Activated B cell treated with CpG ODN at 0.5 μM for 24 hours (primary cell): ENCODE measurements at regions of chr13 and their contacts with region 1.

Region 1: DNA sequence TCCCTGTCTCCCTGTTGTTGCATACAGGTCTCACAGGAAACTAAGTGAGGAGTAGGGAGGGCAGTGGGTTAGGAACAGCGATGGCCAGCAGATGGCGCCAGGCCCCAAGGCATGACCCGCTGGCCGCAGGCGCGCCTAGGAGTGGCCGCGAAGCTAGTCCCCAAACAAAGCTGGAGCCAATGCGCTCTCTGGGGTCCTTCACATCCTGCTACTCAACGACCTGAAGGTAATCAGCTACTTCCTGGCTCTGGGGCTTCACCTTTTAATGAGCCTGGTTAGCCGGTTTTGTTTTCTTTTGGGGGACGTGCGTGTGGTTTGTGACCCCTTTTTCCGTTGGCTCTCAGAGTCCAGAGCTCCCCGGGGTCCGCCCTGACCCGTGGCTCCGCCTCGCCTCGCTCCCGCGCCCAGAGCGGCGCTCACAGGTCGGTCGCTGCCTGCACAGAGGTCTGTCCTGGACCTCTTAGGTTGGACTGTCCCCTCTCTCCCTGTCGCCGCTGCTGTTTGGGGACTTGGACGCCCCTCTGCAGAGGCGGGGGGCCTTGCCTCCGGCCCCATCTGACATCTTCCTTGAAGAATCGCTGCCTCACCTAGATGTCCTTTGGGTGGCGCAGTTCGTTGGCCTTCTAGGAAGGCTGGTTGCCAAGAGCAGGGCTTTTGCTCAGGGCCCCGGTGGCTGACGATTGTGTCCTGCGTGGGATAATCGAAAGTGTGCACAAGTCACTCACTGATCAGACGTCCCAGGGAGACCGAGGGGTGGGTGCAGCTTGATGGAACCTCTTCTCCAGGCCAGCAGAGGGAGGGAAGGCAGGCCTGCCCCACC is 62.1 kb upstream of the GTF3A start:
- DNase-seq: peak; percentile 73
- ATAC-seq: peak; percentile 92
- H3K4me3 Mint-ChIP-seq: peak overlapping the region; percentile 35
- H3K27ac Mint-ChIP-seq: no peak overlapping the region
- H3K4me1 Mint-ChIP-seq: peaks cover 9% of the 10 kb centered on the region
- H3K27me3 Mint-ChIP-seq: peaks cover 11% of the 10 kb centered on the region
- CTCF ChIP-seq: peak; percentile 65

Region 2: GRCh38 chr13:26946684-26947343 is 415.5 kb before region 1 on chr13:
- CTCF ChIA-PET with region 1: interaction called, 7 read pairs
- POLR2A ChIA-PET with region 1: no interaction called
- intact Hi-C with region 1: loop called (anchors 1 kb)
- DNase-seq: no peak
- ATAC-seq: peak; percentile 58
- H3K4me3 Mint-ChIP-seq: no peak overlapping the region
- H3K27ac Mint-ChIP-seq: no peak overlapping the region
- H3K4me1 Mint-ChIP-seq: no peaks in the 10 kb centered on the region
- H3K27me3 Mint-ChIP-seq: peaks cover 5% of the 10 kb centered on the region
- CTCF ChIP-seq: no peak

Region 3: GRCh38 chr13:27339299-27339698 is 23.0 kb before region 1 on chr13:
- CTCF ChIA-PET with region 1: interaction called, 14 read pairs
- POLR2A ChIA-PET with region 1: no interaction called
- intact Hi-C with region 1: loop called (anchors 1 kb)
- DNase-seq: no peak
- ATAC-seq: peak; percentile 71
- H3K4me3 Mint-ChIP-seq: no peak overlapping the region
- H3K27ac Mint-ChIP-seq: no peak overlapping the region
- H3K4me1 Mint-ChIP-seq: peaks cover 3% of the 10 kb centered on the region
- H3K27me3 Mint-ChIP-seq: peaks cover 4% of the 10 kb centered on the region
- CTCF ChIP-seq: no peak

Region 4: DNA sequence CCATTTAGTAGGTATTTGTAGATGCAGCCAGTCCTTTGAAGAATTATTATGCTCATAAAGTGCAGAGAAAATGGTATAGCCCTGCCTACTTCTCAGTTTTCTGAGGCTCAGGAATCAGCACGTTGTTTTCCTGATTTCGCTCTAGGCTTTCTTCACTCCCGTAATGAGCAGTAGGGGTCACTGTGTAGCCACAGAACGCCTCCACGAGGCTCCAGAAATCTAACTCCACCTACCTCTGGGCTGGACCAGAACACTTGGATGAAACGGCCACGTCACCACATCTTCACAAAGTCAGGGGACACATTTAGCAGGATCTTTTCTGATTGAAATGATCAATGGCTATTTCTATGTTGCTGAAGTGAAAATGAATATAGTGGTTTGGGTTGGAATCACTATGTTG is 12.4 kb after region 1 on chr13:
- CTCF ChIA-PET with region 1: interaction called, 32 read pairs
- POLR2A ChIA-PET with region 1: no interaction called
- intact Hi-C with region 1: no loop called
- DNase-seq: no peak
- ATAC-seq: peak; percentile 88
- H3K4me3 Mint-ChIP-seq: no peak overlapping the region
- H3K27ac Mint-ChIP-seq: no peak overlapping the region
- H3K4me1 Mint-ChIP-seq: peaks cover 2% of the 10 kb centered on the region
- H3K27me3 Mint-ChIP-seq: peaks cover 22% of the 10 kb centered on the region
- CTCF ChIP-seq: peak; percentile 75

Region 5: DNA sequence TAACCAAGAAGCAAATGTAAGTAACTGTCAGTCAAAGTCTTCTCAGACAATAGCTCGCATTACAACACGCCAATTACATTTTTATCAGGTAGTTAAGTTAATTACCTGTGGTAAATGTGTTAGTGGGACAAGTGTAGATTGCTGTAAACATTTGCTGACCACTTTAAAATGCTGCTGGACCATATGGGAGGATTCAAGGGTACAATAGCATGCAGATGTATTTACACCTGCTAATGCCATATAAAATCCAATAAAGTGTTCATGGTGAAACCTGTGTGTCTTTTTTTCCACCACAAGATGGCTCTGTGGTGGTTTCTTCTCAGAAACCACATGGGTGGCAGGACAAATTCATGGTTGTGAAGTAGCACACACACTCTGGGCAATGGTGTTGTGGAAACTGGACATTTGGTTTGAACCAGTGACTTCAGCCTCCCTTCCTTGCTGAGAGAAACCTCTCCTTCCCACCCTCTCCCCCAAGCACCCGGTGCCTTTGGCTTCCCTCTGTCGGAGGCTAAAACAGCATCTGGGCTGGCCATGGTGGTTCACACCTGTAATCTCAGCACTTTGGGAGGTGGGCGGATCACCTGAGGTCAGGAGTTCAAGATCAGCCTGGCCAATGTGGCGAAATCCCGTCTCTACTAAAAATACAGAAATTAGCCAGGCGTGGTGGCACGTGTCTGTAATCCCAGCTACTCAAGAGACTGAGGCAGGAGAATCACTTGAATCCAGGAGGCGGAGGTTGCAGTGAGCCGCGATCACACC is 44.1 kb after region 1 on chr13:
- CTCF ChIA-PET with region 1: interaction called, 4 read pairs
- POLR2A ChIA-PET with region 1: no interaction called
- intact Hi-C with region 1: loop called (anchors 1 kb)
- DNase-seq: no peak
- ATAC-seq: peak; percentile 54
- H3K4me3 Mint-ChIP-seq: no peak overlapping the region
- H3K27ac Mint-ChIP-seq: no peak overlapping the region
- H3K4me1 Mint-ChIP-seq: peaks cover 9% of the 10 kb centered on the region
- H3K27me3 Mint-ChIP-seq: peaks cover 8% of the 10 kb centered on the region
- CTCF ChIP-seq: no peak

Region 6: DNA sequence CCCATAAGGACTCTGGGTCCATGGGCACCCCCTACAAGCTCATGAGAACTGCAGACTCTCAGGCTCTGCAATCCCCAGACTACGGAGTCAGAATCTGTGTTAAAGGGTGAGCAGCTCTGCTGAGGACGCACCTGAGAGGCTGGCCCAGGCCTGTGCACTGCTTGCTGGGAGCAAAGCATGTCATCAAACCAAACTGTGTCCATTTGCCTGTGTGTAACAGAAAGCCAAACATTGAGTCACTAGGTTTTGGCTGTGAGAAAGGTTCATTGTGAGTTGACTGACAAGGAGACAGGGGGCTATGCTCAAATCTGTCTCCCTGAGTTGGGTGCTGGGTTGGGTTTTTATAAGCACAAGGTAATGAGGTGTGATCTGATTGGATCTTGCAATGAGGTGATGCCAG is 110.2 kb after region 1 on chr13:
- CTCF ChIA-PET with region 1: no interaction called
- POLR2A ChIA-PET with region 1: no interaction called
- intact Hi-C with region 1: no loop called
- DNase-seq: no peak
- ATAC-seq: no peak
- H3K4me3 Mint-ChIP-seq: no peak overlapping the region
- H3K27ac Mint-ChIP-seq: no peak overlapping the region
- H3K4me1 Mint-ChIP-seq: peaks cover 9% of the 10 kb centered on the region
- H3K27me3 Mint-ChIP-seq: no peaks in the 10 kb centered on the region
- CTCF ChIP-seq: no peak

Region 7: GRCh38 chr13:27977476-27978300 is 615.4 kb after region 1 on chr13:
- CTCF ChIA-PET with region 1: interaction called, 68 read pairs
- POLR2A ChIA-PET with region 1: no interaction called
- intact Hi-C with region 1: no loop called
- DNase-seq: no peak
- ATAC-seq: no peak
- H3K4me3 Mint-ChIP-seq: no peak overlapping the region
- H3K27ac Mint-ChIP-seq: no peak overlapping the region
- H3K4me1 Mint-ChIP-seq: peaks cover 36% of the 10 kb centered on the region
- H3K27me3 Mint-ChIP-seq: peaks cover 79% of the 10 kb centered on the region
- CTCF ChIP-seq: no peak